ENCODE measurements at regions of chr9 and their contacts with region 1.

Region 1: DNA sequence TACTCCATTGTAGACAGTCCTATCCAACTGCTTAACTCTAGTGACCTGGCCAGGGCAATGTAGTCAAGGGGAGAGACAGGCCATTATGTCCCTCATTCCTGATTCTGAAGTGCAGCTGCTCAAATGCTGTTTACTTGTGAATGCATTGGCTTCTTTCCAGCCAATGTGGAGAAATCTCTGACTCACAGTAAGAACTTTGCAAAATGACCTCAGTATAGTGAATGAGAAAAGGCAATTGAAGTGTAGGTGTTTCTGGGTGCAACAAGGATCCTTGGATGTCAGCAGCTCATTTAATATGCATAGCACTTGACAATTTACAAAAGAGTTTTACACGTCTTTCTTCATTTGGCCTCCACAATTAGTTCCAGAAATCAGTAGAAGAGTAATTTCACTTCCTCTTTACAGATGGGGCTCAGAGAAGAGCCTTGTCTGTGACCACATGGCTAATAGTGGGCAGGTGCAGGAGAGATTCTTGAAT is 367.2 kb downstream of the OSTF1 start:
- DNase-seq: peak in 1 of 6 donors; percentile 17
- ATAC-seq: peak in 2 of 4 donors; percentile 48 to 53
- H3K4me3 ChIP-seq: no peak overlapping the region
- H3K27ac ChIP-seq: no peak overlapping the region
- H3K4me1 ChIP-seq: no peaks in the 10 kb centered on the region
- H3K27me3 ChIP-seq: peaks cover 0 to 4% (median 0%) of the 10 kb centered on the region in 4 donors
- CTCF ChIP-seq: no peak

Region 2: DNA sequence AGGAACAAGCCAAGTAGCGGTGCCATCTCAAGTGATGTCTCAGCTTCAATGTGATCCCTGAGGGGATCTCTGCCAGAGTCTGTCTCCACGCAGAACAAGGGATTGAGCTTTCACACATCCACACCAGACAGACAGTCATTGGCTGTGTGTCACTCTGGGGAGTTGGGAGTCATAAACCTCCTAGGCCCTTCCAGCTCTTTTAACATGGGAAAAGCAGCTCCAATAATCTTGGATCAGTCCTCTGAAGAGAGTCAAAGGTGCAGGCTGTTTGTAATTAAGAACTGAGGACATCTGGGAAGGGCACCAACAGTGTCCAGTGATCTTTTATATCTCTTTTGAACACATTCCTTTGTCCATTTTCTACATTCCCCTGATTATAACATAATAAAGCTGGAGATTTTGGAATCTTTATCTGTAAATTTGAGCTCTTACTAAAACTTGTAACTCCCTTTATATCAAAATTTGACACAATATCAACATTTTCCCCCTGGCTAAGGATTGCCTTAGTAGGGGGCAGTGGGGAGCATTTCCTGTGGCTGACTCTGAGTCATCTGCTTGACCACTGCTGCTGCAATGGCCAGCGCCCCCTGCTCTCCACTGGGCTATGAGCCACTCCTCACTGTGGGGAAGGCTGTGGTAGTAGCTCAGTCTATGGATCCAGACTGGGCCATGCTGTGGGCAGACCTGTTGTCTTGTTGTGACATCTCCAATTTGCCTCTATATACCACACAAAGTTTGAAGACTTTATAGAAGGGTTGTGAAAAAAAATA is 82.8 kb before region 1 on chr9:
- intact Hi-C with region 1: no loop called
- DNase-seq: no peak
- ATAC-seq: peak in 3 of 4 donors; percentile 57 to 69 (median 62)
- H3K4me3 ChIP-seq: no peak overlapping the region
- H3K27ac ChIP-seq: no peak overlapping the region
- H3K4me1 ChIP-seq: no peaks in the 10 kb centered on the region
- H3K27me3 ChIP-seq: no peaks in the 10 kb centered on the region
- CTCF ChIP-seq: no peak

Region 3: DNA sequence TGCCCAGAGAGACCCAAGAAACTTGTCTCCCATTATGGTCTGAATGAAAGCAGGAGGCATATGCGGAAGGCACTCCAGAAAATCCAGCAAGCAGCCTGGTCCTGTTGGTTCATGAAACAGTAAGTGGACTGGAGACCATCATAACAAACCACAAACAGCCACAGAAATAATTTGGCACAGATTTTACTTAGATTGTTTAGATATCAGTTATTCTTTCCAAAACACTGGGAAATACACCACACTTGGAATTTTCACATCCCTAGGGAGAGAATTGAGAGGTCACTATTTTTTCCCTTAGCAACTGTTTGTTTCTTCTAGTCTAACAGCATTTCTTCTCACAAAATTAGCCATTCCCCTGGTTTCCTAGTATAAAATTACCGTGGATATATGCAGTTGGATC is 66.4 kb before region 1 on chr9:
- intact Hi-C with region 1: loop called in 1 of 3 experiments (anchors 10 kb)
- DNase-seq: no peak
- ATAC-seq: no peak
- H3K4me3 ChIP-seq: no peak overlapping the region
- H3K27ac ChIP-seq: no peak overlapping the region
- H3K4me1 ChIP-seq: no peaks in the 10 kb centered on the region
- H3K27me3 ChIP-seq: no peaks in the 10 kb centered on the region
- CTCF ChIP-seq: no peak